GM18951 (cell line): ENCODE measurements at regions of chr17 and their contacts with region 1.

Region 1: GRCh38 chr17:15260376-15261257 is 4.5 kb downstream of the PMP22 start:
- POLR2A ChIP-seq: no peak

Region 2: GRCh38 chr17:15143524-15143923 is 117.1 kb before region 1 on chr17:
- in situ Hi-C with region 1: no loop called
- POLR2A ChIP-seq: no peak

Region 3: GRCh38 chr17:15377616-15378015 is 117.0 kb after region 1 on chr17:
- in situ Hi-C with region 1: no loop called
- POLR2A ChIP-seq: no peak

Region 4: DNA sequence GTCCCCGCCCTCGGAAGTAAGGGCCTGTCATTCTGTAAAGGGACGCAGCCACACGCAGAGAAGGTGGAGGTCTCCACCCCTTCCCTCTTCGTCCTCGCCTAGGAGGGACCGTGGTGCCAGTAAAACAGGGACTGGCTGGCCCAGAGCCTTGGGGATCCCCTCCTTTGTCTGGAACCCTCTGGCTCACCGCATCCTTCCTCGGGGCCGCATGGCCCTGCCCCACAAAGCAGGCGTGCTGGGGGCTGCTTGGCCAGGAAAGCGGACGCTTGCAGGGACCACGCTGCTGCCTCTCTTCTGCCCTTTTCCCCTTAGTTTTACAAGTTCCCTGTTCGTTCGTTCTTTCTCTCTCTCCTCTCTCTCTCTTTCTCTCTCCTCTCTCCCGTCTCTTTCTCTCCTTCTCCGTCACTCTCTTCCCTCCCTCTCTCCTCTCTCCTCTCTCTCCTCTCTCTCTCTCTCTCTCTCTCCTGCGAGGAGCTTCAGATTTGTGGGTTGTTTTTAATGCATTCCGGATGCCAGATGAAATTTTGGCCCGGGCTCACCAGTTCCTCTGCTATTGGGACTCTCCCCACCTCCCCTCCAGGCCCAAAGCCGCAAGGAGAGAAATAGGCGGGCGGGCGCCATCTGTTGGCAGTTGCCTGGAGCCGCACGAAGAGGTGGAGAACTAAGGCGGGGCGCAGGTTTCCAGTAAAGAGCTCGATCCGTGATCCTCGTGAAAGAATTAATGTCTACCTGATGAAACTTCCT is 241.9 kb after region 1 on chr17:
- in situ Hi-C with region 1: loop called (anchors 10 kb)
- POLR2A ChIP-seq: no peak

Region 5: GRCh38 chr17:15651583-15652110 is 391.0 kb after region 1 on chr17:
- in situ Hi-C with region 1: no loop called
- POLR2A ChIP-seq: peak; percentile 12